ENCODE measurements at regions of chr10 and their contacts with region 1.

Region 1: DNA sequence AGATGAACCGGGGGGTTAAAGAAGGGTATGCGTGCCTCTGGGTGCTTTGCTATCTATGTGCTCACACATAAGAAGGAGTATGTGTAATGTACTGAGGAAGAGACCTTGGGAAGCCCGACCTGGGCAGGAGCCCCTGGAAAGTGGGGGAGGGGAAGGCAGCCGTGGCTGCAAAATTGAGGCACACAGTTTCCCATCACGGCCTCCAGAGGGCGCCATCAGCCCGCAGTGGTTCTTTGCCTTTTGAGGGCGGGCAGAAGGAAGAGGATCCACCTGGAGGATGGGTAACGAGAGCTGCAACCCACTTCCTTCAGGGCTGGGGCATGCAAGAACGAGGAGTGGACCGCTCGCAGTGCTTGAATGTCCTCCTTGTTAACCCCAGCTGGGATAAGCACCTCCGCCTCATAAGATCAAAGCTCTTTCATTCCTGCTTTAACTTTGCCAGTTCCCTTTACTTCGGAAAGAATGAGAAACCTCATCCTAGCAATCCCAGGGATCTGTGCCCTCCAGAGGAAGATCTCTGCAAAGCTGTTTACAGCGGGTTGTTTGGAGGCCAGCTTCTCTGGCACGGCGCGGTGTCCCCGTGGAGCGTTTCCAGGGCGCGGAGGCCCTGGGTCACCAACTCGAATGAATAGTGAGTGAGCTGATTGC is 77.9 kb downstream of the PCGF5 start:
- DNase-seq: peak; percentile 64 to 86
- H3K4me3 ChIP-seq: peak overlapping the region; percentile 40 to 60
- H3K27ac ChIP-seq: peak overlapping the region; percentile 41 to 46
- H3K4me1 ChIP-seq: peaks cover 0 to 7% (median 5%) of the 10 kb centered on the region in 4 donors
- H3K27me3 ChIP-seq: no peaks in the 10 kb centered on the region
- CTCF ChIP-seq: peak; percentile 96 to 97

Region 2: DNA sequence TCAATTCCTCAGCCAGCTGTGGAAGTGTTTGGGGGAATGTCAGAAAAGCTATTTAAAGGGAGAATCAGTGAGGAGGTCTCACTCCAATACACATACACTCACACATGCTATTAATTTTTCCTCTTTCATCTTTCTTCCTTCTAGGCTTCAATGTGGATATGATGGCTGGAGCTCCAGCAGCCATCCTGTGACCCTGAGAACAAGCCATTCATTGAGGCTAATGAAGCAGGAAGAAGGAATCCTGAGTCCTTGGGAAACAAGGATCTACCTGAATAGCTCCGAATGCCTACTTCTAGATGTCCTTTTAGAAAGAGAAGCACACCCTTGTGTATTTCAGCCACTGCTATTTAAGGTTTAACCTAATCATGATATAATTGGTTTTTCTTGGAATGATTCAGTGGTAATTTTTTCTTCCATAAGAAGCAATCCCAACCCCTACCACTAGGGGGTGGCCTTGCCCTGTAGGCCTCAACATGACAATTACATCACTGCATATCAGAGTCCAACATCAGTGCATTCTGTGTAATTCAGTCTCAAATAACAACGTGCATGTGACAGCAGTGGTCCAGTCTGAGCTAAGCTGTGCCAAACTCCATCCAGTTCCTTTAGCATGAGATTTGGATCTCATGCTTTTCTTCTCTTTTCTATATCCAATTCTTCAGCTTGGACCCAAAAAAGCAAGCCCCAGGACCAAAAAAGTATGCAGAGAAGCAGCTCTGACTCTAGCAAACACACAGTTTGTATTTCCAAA is 292.2 kb before region 1 on chr10:
- intact Hi-C with region 1: no loop called
- DNase-seq: peak; percentile 56 to 77
- H3K4me3 ChIP-seq: no peak overlapping the region
- H3K27ac ChIP-seq: peak overlapping the region; percentile 54 to 58
- H3K4me1 ChIP-seq: peaks cover 0 to 31% (median 14%) of the 10 kb centered on the region in 4 donors
- H3K27me3 ChIP-seq: no peaks in the 10 kb centered on the region
- CTCF ChIP-seq: peak; percentile 92 to 96

Region 3: DNA sequence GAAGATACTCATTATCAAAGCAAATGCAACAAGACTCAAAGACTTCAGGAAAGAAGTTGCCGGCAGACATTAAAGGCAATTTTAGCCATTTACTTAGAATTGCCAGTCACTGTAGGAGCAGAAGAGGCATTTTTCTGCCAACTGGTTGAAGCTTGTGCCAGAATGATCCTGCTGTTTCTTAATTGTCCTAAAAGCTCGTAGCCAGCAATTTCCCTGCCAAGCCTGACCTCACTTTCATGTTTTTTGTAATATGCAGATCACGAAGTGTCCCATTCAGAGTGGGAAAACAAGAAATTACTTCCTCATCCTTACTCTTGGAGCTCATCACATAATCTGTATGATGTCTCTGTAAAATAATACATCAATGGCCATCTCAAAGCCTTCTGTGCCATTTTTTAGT is 246.5 kb before region 1 on chr10:
- intact Hi-C with region 1: no loop called
- DNase-seq: peak in 1 of 2 donors; percentile 75
- H3K4me3 ChIP-seq: no peak overlapping the region
- H3K27ac ChIP-seq: no peak overlapping the region
- H3K4me1 ChIP-seq: peaks cover 0 to 52% (median 14%) of the 10 kb centered on the region in 4 donors
- H3K27me3 ChIP-seq: no peaks in the 10 kb centered on the region
- CTCF ChIP-seq: no peak

Region 4: GRCh38 chr10:91389636-91390512 is 91.5 kb after region 1 on chr10:
- intact Hi-C with region 1: loop called (anchors 10 kb)
- DNase-seq: no peak
- H3K4me3 ChIP-seq: peak overlapping the region; percentile 6 to 17
- H3K27ac ChIP-seq: no peak overlapping the region
- H3K4me1 ChIP-seq: peaks cover 0 to 5% (median 0%) of the 10 kb centered on the region in 4 donors
- H3K27me3 ChIP-seq: no peaks in the 10 kb centered on the region
- CTCF ChIP-seq: peak; percentile 55 to 70

Region 5: DNA sequence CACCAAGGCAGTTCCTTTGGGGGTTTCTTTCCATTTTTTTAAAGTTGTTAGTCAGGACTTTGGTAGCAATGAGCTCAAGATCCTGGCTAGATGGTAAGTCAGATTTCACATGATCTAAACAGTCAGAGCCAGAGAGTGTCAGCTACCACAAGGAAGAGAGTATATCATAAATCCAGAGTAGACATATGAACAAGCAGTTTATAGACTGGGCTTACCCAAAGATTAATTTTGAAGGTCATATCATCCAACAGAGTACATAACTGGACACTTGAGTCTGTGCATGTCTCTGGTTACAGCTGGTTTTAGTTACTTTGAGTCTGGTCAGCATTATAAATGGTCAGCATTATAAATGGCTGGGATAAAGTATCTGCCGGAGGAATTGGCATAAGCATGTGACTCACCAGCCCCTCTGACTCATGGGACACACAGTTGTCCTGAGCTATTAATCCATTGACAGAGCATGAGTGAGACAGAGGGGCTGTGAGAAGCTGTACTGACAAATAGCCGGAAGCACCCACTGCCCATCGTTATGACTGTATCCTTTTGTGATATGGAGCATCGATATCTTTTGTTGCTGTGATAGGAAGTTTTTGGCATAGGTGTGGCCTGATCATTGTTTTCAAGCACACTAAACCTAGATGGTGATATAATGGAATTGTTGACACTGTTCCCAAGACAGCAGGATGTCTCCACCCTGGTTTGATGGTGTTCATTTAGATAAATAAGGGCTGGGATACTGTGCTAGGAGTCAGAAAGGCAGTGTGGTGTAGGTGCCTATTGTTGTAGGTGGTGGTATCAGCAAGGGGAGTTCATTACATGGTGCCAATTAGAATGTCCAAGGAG is 315.3 kb after region 1 on chr10:
- intact Hi-C with region 1: no loop called
- DNase-seq: no peak
- H3K4me3 ChIP-seq: no peak overlapping the region
- H3K27ac ChIP-seq: peak overlapping the region; percentile 58
- H3K4me1 ChIP-seq: peaks cover 4 to 59% (median 31%) of the 10 kb centered on the region in 4 donors
- H3K27me3 ChIP-seq: no peaks in the 10 kb centered on the region
- CTCF ChIP-seq: no peak